ENCODE measurements at regions of chr5 and their contacts with region 1.

Region 1: GRCh38 chr5:33675958-33676464 is 215.8 kb downstream of the ADAMTS12 start:
- DNase-seq: peak; percentile 76
- ATAC-seq: peak; percentile 91
- H3K4me3 ChIP-seq: peak overlapping the region; percentile 10; the same call in 1 of the 2 replicates
- H3K27ac ChIP-seq: peak overlapping the region; percentile 88
- H3K4me1 ChIP-seq: peaks cover 27% of the 10 kb centered on the region
- H3K27me3 ChIP-seq: no peaks in the 10 kb centered on the region
- CTCF ChIP-seq: no peak
- EP300 ChIP-seq: peak in 1 of 2 experiments; percentile 41; a peak in 2 of 4 replicates
- POLR2A ChIP-seq: no peak
- RAD21 ChIP-seq: no peak

Region 2: DNA sequence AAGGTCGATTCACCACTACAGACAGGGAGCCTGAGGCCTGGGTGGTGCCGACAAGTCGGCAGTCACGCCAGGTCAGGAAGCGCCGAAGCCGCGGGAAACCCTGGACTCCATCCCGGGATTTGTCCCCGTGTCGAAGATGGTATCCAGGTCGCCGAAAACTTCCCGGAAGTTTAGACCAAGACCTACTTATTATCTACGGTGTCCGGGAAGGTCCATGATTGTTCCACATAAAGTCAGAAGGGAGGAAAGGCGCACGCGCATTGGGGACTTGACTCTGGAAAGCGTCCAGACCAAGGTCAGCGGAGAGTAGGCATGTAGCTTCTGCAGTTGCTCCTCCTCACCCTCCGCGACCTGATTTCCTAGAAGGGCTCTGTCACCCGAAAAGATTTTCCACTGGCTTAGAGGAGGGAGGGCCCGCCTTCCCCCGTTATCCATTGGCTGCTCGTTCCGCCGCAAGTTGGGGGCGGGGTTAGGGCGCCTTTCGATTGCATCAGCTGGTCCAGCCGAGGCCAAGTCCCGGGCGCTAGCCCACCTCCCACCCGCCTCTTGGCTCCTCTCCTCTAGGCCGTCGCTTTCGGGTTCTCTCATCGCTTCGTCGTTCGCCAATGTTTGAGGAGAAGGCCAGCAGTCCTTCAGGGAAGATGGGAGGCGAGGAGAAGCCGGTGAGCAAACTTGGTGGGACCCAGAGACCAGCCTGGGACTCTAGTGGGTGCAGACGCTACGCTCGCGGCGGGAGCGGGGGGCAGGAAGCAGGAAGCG is 235.3 kb before region 1 on chr5 and contains the start of gene TARS1:
- CTCF ChIA-PET with region 1: interaction called, 4 read pairs
- POLR2A ChIA-PET with region 1: no interaction called
- RAD21 ChIA-PET with region 1: interaction called, 5 read pairs
- SMC1A ChIA-PET with region 1: interaction called, 4 read pairs
- in situ Hi-C with region 1: no loop called
- intact Hi-C with region 1: loop called (anchors 10 kb)
- DNase-seq: peak; percentile 100
- ATAC-seq: peak; percentile 94
- H3K4me3 ChIP-seq: peak within 1 kb of the TSS; percentile 96
- H3K27ac ChIP-seq: peak within 1 kb of the TSS; percentile 92
- H3K4me1 ChIP-seq: no peaks in the 10 kb centered on the region
- H3K27me3 ChIP-seq: no peaks in the 10 kb centered on the region
- CTCF ChIP-seq: no peak
- EP300 ChIP-seq: 0 out of 4 replicates have a peak, but pooled peaks of 1 of the 2 experiments have one; percentile 21
- POLR2A ChIP-seq: peak; percentile 95
- RAD21 ChIP-seq: no peak
- polyA plus RNA-seq, gene TARS1: 163 to 244 TPM

Region 3: DNA sequence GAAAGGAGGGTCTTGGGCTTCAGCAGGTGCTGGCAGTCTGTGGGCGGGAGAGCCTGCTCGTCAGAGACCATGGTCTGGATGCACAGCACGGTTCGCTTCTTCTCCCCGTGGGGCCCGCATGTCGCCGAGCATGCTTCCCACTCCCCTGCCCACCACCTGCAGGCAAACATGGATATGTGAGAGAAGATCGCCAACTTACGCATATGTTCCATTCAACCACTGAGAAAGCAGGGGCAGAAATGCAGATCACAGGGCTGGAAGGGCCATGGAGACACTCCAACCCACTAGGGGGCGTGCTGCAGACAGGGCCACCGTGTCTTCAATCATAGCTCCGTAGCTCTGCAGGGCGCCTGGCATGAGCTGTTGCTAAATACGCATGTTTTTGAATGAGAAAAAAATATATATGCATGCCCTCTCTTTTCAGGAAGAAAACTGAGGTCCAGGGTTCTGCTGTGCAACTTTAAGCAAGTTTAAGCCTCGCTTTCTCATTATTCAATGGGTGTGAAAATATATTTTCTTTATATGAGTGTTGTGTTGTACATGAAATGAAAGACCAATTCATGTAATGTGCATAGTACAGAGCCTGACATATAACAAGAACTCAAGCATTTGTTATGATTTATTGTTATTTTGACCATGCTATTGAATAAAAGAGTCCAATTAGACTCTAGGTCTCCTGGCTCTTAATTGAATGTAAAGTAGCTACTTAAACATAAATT is 87.2 kb before region 1 on chr5:
- CTCF ChIA-PET with region 1: interaction called, 4 read pairs
- POLR2A ChIA-PET with region 1: no interaction called
- RAD21 ChIA-PET with region 1: interaction called, 10 read pairs
- SMC1A ChIA-PET with region 1: interaction called, 5 read pairs
- in situ Hi-C with region 1: no loop called
- intact Hi-C with region 1: no loop called
- DNase-seq: no peak
- ATAC-seq: peak; percentile 83
- H3K4me3 ChIP-seq: no peak overlapping the region
- H3K27ac ChIP-seq: no peak overlapping the region
- H3K4me1 ChIP-seq: no peaks in the 10 kb centered on the region
- H3K27me3 ChIP-seq: no peaks in the 10 kb centered on the region
- CTCF ChIP-seq: peak; percentile 35 to 59 (median 53)
- EP300 ChIP-seq: no peak
- POLR2A ChIP-seq: no peak
- RAD21 ChIP-seq: peak; percentile 55

Region 4: DNA sequence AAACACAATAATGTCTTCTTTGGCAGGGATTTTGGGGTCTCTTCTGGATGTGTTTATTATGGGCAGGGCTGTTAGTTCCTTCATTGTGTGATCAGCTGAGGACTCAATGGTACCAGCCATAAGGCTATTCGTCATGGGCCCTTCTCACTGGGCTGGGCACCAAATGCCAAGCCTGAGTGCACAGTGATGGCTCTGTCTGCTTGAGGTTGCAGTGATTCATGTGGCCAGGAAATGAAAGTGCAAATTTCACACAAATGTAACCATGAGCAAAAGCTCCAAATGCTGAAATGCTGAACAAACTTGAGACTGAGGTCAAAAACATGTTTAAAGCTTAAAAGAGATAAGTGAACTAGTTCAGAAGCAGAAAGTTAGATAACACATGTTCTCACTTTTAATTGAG is 44.2 kb before region 1 on chr5:
- CTCF ChIA-PET with region 1: interaction called, 3 read pairs
- POLR2A ChIA-PET with region 1: no interaction called
- RAD21 ChIA-PET with region 1: interaction called, 10 read pairs
- SMC1A ChIA-PET with region 1: interaction called, 5 read pairs
- in situ Hi-C with region 1: no loop called
- intact Hi-C with region 1: loop called (anchors 5 kb)
- DNase-seq: peak; percentile 76
- ATAC-seq: peak; percentile 100
- H3K4me3 ChIP-seq: no peak overlapping the region
- H3K27ac ChIP-seq: no peak overlapping the region
- H3K4me1 ChIP-seq: peaks cover 10% of the 10 kb centered on the region; the same call in 1 of the 2 replicates
- H3K27me3 ChIP-seq: no peaks in the 10 kb centered on the region
- CTCF ChIP-seq: no peak
- EP300 ChIP-seq: no peak; a peak in 1 of 4 replicates
- POLR2A ChIP-seq: no peak
- RAD21 ChIP-seq: 0 out of 2 replicates have a peak, but pooled peaks have one; percentile 18

Region 5: GRCh38 chr5:33641744-33642505 is 34.1 kb before region 1 on chr5:
- CTCF ChIA-PET with region 1: interaction called, 3 read pairs
- POLR2A ChIA-PET with region 1: no interaction called
- RAD21 ChIA-PET with region 1: interaction called, 6 read pairs
- SMC1A ChIA-PET with region 1: interaction called, 17 read pairs
- in situ Hi-C with region 1: no loop called
- intact Hi-C with region 1: no loop called
- DNase-seq: peak; percentile 37
- ATAC-seq: peak; percentile 79
- H3K4me3 ChIP-seq: no peak overlapping the region
- H3K27ac ChIP-seq: no peak overlapping the region
- H3K4me1 ChIP-seq: no peaks in the 10 kb centered on the region
- H3K27me3 ChIP-seq: no peaks in the 10 kb centered on the region
- CTCF ChIP-seq: no peak
- EP300 ChIP-seq: no peak
- POLR2A ChIP-seq: no peak
- RAD21 ChIP-seq: no peak

Region 6: DNA sequence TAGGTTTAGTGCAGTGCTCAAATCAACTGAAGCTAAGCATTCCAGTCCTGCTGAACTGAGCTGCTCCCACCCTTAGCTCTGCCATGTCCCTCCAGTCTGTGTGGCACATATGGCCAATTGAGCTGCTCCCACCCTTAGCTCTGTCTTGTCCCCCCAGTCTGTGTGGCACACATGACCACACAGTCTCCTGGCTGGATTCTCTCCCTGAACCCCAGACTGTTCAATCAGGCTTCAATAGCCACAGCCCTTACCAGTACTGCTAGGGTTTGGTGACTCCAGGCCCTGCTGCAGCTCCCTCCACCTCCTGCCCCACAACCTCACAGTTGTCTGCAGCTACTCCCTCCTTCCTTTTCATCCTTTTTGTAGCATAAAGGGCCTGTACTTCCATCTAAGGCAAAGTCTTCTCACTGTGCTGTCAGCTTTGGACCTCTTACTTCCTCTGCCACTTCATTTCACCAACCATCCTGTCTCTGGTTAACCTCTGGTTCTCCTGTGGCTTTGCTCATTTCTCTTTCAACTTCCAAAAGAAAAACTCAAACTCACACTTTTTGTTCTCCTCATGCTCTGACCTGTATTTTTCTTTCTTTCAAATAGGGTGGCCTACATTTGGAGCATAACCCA is 165.0 kb after region 1 on chr5:
- CTCF ChIA-PET with region 1: no interaction called
- POLR2A ChIA-PET with region 1: no interaction called
- RAD21 ChIA-PET with region 1: interaction called, 7 read pairs
- SMC1A ChIA-PET with region 1: interaction called, 11 read pairs
- in situ Hi-C with region 1: no loop called
- intact Hi-C with region 1: no loop called
- DNase-seq: peak; percentile 58
- ATAC-seq: peak; percentile 78
- H3K4me3 ChIP-seq: no peak overlapping the region; the same call in 1 of the 2 replicates
- H3K27ac ChIP-seq: peak overlapping the region; percentile 83
- H3K4me1 ChIP-seq: peaks cover 43% of the 10 kb centered on the region
- H3K27me3 ChIP-seq: no peaks in the 10 kb centered on the region
- CTCF ChIP-seq: no peak
- EP300 ChIP-seq: no peak
- POLR2A ChIP-seq: no peak
- RAD21 ChIP-seq: 0 out of 2 replicates have a peak, but pooled peaks have one; percentile 2

Region 7: DNA sequence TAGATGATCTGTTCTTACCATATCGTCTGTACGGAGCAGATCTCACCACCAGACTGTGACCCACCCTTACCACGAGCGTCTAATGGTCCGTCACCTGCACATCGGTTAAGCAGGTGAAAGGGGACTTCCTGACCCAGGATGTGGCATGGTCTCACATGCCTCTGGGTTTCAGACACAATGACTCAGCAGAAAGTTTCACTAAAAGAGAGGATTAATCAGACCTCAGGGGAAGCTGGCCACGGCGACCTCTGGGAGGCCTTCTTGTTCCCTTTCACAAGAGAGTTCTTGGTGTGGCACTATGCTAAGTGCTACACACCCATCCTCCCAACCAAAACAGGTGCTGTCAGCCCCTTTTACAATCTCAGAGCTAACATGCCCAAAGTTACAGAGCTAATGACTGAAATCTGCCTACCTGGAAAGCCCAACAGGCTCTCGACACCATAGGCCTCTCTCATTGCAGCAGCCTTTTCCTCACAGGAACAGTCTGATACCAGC is 174.1 kb after region 1 on chr5:
- CTCF ChIA-PET with region 1: interaction called, 4 read pairs
- POLR2A ChIA-PET with region 1: interaction called, 8 read pairs
- RAD21 ChIA-PET with region 1: interaction called, 31 read pairs
- SMC1A ChIA-PET with region 1: interaction called, 20 read pairs
- in situ Hi-C with region 1: no loop called
- intact Hi-C with region 1: loop called (anchors 1 kb)
- DNase-seq: peak; percentile 99
- ATAC-seq: peak; percentile 96
- H3K4me3 ChIP-seq: 0 out of 2 replicates have a peak overlapping the region, but pooled peaks have one; percentile 5
- H3K27ac ChIP-seq: peak overlapping the region; percentile 97
- H3K4me1 ChIP-seq: peaks cover 72% of the 10 kb centered on the region
- H3K27me3 ChIP-seq: no peaks in the 10 kb centered on the region
- CTCF ChIP-seq: peak in 1 of 3 experiments; percentile 23; a peak in 1 of 6 replicates
- EP300 ChIP-seq: peak; percentile 99
- POLR2A ChIP-seq: no peak
- RAD21 ChIP-seq: peak; percentile 54